SK-N-SH (cell line): ENCODE measurements at regions of chr7 and their contacts with region 1.

Region 1: DNA sequence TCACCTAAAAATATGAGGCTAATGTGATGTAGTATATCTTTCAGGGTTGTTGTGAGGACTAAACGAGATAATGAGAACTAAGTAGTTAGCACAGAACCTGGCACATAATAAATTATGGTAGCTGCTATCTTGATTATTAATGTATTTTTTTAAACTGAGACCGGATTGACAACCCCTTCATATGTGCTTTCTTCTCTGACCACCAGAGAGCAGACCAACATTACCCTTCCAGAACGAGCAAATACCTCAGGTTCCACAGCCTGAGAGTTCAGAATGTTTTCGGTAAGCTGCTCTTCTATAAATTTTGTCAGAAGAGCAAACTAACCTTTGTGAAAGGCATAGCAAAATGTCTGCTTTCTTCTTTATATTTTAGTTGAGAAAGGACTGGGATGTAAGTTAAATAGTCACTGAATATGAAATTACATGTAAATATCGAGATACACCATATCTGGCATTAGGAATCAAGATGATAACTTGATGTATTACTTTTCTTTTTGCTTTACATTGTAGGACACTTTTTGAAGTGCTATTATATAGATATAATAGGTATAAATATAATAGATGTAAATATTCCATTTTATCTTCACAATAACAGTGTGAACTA is 13.6 kb upstream of the BPGM start:
- DNase-seq: peak; percentile 34
- H3K4me3 ChIP-seq: no peak overlapping the region
- H3K27ac ChIP-seq: no peak overlapping the region
- H3K4me1 ChIP-seq: no peaks in the 10 kb centered on the region
- H3K27me3 ChIP-seq: no peaks in the 10 kb centered on the region
- CTCF ChIP-seq: peak; percentile 83
- EP300 ChIP-seq: no peak
- RAD21 ChIP-seq: peak; percentile 93

Region 2: DNA sequence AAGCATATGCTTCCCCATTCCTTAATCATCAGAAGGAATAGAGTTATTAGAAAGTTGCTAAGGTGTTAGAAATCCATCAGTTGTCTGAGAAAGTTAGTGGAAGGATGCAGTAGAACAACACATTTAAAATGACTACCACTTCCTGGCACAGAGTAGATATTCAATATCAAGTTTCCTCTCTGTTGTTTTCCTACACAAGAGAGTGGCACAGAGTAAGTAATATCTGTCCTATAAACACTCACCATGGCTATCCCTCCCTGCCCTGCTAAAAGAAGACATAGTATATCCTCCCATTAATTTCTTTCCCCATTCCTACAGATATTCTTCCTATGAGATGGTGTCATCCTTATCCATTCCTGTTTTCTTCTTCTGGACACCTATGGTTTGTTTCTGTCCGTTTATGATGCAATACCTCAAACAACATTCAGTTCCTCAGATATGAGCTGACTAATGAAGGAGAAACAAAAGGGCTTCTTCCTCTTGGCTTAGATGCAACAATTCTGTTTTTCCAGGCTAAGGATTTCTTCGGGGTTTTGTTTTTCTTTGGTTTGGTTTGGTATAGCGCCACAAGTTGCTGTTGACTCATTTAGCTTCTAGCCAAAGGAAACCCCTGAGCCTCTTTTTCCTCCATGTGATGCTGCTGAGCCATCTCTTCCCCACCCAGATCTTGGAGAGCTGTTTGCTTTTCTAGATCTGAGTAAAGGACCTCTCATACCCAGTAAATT is 19.3 kb before region 1 on chr7:
- CTCF ChIA-PET with region 1: interaction called, 35 read pairs
- POLR2A ChIA-PET with region 1: no interaction called
- DNase-seq: no peak
- H3K4me3 ChIP-seq: no peak overlapping the region; a peak in 1 of 4 replicates
- H3K27ac ChIP-seq: peak overlapping the region in 1 of 2 experiments; percentile 98; a peak in 2 of 4 replicates
- H3K4me1 ChIP-seq: peaks cover 0 to 21% of the 10 kb centered on the region in 2 experiments; a peak in 2 of 4 replicates
- H3K27me3 ChIP-seq: no peaks in the 10 kb centered on the region
- CTCF ChIP-seq: peak; percentile 26
- EP300 ChIP-seq: peak in 1 of 2 experiments; percentile 80; a peak in 2 of 4 replicates
- RAD21 ChIP-seq: no peak

Region 3: DNA sequence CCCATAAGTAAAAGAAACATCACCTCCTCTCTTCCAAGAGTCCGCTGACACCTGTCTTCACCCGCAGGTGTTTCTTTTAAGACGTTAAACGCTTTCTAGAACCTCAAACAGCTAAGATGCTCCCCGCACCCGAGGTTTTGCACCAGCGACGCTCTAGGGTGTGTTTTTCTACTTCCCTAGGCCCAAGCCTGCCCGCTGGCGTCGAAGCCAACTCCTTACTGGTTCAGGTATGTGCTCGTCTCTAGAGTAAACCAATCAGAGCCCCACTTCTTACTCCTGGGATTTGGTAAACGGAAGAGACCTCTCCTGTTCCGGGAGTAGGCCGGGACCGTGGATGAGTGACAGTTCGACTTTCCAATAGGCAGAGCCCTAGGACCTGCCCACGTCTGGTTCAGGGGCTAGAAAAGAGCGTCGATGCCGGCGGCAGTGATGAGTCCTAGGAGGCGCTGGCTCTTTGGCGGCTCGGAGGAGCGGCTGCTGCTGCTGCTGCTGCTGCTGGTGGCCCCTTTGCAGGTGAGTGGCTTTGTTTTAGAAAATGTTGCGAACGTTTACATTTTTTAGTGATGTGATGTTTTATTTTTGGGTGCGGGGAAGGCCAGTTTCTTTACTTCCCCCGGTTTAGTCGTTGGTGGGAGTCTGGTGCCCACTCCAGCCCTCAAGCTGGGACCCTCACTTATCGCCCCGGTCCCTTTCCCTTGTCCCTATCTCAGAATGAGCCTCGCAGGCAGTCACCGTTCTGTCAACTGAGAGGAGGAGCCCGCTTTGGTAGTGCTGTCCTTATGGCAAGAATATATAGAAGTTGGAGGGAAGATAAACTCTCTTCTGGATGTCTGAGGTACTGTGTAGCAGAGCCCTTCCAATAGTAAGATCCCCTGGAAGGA is 13.6 kb after region 1 on chr7 and contains the start of gene BPGM:
- CTCF ChIA-PET with region 1: interaction called, 64 read pairs
- POLR2A ChIA-PET with region 1: no interaction called
- DNase-seq: peak; percentile 94
- H3K4me3 ChIP-seq: peak within 1 kb of the TSS; percentile 75 to 79
- H3K27ac ChIP-seq: peak within 1 kb of the TSS; percentile 80 to 81
- H3K4me1 ChIP-seq: peaks cover 11 to 15% of the 10 kb centered on the region in 2 experiments; a peak in 3 of 4 replicates
- H3K27me3 ChIP-seq: no peaks in the 10 kb centered on the region
- CTCF ChIP-seq: peak; percentile 56
- EP300 ChIP-seq: no peak
- RAD21 ChIP-seq: peak; percentile 10; the same call in 1 of the 2 replicates
- polyA plus RNA-seq, gene BPGM: 12.4 and 17.4 TPM in 2 replicates

Region 4: DNA sequence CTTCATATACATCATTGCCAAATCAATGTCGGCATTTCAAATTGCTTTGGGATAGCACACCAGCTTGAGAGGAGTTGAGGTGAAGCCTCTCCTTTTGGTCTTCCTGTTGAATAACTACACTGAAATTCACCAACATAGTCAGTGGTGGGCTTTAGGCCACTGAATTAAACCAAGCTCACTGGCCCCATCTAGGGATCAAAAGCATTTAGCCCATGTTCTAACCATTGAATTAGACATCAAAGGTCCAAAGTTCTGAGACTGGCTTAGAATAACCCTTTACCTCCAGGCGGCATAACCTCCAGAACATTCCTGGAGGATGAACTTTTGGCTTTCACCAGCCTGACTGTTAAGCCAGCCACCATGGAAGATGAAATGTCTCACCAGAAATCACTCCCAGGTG is 68.2 kb after region 1 on chr7:
- CTCF ChIA-PET with region 1: interaction called, 21 read pairs
- POLR2A ChIA-PET with region 1: no interaction called
- DNase-seq: peak; percentile 48
- H3K4me3 ChIP-seq: no peak overlapping the region
- H3K27ac ChIP-seq: no peak overlapping the region
- H3K4me1 ChIP-seq: no peaks in the 10 kb centered on the region; a peak in 2 of 4 replicates
- H3K27me3 ChIP-seq: no peaks in the 10 kb centered on the region
- CTCF ChIP-seq: peak; percentile 62
- EP300 ChIP-seq: no peak
- RAD21 ChIP-seq: peak; percentile 66

Region 5: GRCh38 chr7:134782121-134782623 is 149.1 kb after region 1 on chr7:
- CTCF ChIA-PET with region 1: no interaction called
- POLR2A ChIA-PET with region 1: no interaction called
- DNase-seq: no peak
- H3K4me3 ChIP-seq: peak overlapping the region; percentile 69 to 74; a peak in 3 of 4 replicates
- H3K27ac ChIP-seq: peak overlapping the region; percentile 87 to 90; a peak in 3 of 4 replicates
- H3K4me1 ChIP-seq: peaks cover 30 to 42% of the 10 kb centered on the region in 2 experiments
- H3K27me3 ChIP-seq: no peaks in the 10 kb centered on the region
- CTCF ChIP-seq: no peak
- EP300 ChIP-seq: no peak
- RAD21 ChIP-seq: no peak

Region 6: DNA sequence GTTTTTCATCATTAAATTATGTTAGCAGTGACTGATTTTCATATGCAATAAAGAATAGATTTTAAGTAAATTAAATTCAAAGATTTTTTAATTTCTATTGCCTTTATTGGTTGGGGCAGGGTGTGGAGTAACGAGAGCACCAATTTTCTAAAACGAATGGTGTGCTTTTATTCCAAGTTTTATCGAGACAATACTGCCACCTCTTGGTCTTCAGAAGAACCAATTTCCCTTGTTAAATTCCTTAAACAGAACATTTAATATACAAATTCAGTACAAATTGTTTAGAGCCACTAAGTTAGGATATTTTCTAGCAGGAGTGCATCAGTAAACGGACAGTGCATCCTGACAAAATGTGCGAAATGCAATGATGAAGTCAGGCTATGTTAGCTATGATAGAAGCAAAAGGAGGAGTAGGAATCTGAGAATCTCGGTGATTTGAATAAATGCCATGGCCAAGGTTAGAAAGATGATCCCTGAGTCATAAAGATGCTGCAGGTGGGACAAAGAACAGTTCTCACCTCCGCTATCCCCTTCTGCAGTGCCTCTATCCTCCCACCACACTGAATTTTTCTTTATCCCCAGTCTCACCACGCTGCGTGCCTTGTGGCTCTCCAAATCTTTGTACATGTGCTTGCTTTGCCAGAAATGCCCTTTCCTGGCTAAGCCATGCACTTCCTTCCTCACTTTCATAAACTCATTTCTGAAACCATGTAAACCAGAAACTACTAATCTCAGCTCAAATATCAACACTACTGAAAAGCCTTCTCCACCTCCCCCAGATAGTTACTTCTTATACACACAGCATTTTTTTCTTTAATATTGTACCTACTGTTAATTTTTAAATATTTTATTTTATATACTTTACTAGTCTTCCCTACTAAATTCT is 321.4 kb after region 1 on chr7:
- CTCF ChIA-PET with region 1: interaction called, 15 read pairs
- POLR2A ChIA-PET with region 1: interaction called, 3 read pairs
- DNase-seq: peak; percentile 44
- H3K4me3 ChIP-seq: no peak overlapping the region
- H3K27ac ChIP-seq: no peak overlapping the region
- H3K4me1 ChIP-seq: no peaks in the 10 kb centered on the region
- H3K27me3 ChIP-seq: no peaks in the 10 kb centered on the region
- CTCF ChIP-seq: peak; percentile 79
- EP300 ChIP-seq: no peak
- RAD21 ChIP-seq: peak; percentile 86